GM12878 (cell line): ENCODE measurements at regions of chr9 and their contacts with region 1.

Region 1: GRCh38 chr9:35071814-35072460 is 488 bp downstream of the VCP start:
- DNase-seq: no peak
- ATAC-seq: peak; percentile 86
- H3K4me3 ChIP-seq: peak overlapping the region; percentile 78
- H3K27ac ChIP-seq: peak overlapping the region; percentile 88
- H3K4me1 ChIP-seq: peaks cover 12% of the 10 kb centered on the region
- H3K27me3 ChIP-seq: no peaks in the 10 kb centered on the region
- CTCF ChIP-seq: peak in 2 of 3 experiments; percentile 29 to 33; a peak in 3 of 6 replicates
- EP300 ChIP-seq: no peak
- POLR2A ChIP-seq: no peak; the same call in 1 of the 2 replicates
- RAD21 ChIP-seq: no peak

Region 2: DNA sequence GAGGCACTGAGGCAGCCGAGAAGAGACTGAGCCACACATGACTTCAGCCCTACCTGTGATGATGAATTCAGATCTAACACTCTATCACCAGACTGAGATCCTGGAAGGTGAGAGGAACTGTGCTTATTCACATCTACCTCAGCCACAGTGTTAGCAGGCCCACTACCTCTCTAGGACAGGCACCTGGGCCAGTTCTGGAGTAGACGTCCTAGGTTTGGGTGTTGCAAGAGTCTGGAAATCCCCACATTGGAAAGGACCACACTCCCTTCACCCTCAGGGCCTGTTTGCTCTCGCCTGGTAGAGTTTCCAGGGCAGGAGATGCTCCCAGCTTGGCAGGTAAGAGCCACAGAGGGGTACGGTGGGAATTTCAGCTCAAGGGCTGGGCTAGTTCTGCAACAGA is 248.2 kb before region 1 on chr9:
- CTCF ChIA-PET with region 1: no interaction called
- POLR2A ChIA-PET with region 1: no interaction called
- RAD21 ChIA-PET with region 1: no interaction called
- SMC1A ChIA-PET with region 1: no interaction called
- in situ Hi-C with region 1: no loop called
- intact Hi-C with region 1: no loop called
- DNase-seq: no peak
- ATAC-seq: no peak
- H3K4me3 ChIP-seq: no peak overlapping the region
- H3K27ac ChIP-seq: no peak overlapping the region
- H3K4me1 ChIP-seq: no peaks in the 10 kb centered on the region
- H3K27me3 ChIP-seq: no peaks in the 10 kb centered on the region
- CTCF ChIP-seq: no peak
- EP300 ChIP-seq: no peak
- POLR2A ChIP-seq: no peak
- RAD21 ChIP-seq: no peak

Region 3: DNA sequence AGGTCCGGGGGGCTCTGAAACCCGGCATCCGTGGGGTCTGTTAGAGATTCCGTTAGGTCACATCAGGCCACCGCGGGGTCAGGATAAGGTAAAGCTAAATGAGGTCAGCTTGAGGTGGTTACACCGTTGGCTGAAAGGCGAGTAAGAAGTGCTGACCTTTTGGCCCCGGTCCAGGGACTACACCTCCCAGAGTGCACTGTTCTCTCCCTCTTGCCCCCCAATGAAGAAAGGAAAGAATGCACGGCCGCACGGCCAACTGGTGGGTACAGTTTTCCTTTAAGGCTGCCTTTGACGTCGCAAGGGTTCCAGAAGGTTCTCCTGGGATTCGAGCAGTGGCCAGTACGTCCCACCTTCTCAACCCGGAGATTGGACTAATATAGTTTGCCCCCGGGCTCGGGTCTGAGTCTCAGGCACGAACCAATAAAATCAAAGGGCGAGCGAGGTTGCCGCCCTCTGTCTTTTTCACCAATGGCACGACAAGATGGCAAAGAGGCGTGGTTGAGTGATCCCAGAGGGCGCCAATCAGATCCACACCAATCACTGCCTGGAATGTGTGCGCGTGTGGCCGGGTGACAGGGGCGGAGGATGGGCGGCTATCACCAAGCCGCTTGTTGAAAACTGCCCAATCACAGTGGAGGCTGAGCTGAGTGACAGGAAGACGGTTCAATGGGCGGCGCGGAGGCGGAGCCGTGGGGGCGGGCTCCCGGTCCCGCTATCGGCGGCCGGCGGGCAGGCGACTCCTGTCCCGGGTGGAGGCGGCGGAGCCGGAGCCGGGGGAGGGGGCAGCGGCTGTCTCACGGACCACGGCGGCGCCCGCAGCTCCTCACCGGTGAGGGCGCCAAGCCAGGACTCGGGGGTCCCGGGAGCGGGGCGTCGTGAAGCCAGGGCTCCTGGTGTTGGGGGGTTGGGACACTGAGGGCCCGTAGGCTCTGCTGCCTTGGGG is 82.7 kb before region 1 on chr9 and contains the start of gene DNAJB5:
- CTCF ChIA-PET with region 1: interaction called, 7 read pairs
- POLR2A ChIA-PET with region 1: interaction called, 18 read pairs
- RAD21 ChIA-PET with region 1: interaction called, 5 read pairs
- SMC1A ChIA-PET with region 1: interaction called, 3 read pairs
- in situ Hi-C with region 1: no loop called
- intact Hi-C with region 1: loop called (anchors 5 kb)
- DNase-seq: peak; percentile 97
- ATAC-seq: peak; percentile 92
- H3K4me3 ChIP-seq: peak within 1 kb of the TSS; percentile 95
- H3K27ac ChIP-seq: peak within 1 kb of the TSS; percentile 79
- H3K4me1 ChIP-seq: peaks cover 51% of the 10 kb centered on the region
- H3K27me3 ChIP-seq: no peaks in the 10 kb centered on the region
- CTCF ChIP-seq: no peak
- EP300 ChIP-seq: no peak
- POLR2A ChIP-seq: peak; percentile 71
- RAD21 ChIP-seq: no peak
- polyA plus RNA-seq, gene DNAJB5: 0.92 to 1.5 TPM

Region 4: DNA sequence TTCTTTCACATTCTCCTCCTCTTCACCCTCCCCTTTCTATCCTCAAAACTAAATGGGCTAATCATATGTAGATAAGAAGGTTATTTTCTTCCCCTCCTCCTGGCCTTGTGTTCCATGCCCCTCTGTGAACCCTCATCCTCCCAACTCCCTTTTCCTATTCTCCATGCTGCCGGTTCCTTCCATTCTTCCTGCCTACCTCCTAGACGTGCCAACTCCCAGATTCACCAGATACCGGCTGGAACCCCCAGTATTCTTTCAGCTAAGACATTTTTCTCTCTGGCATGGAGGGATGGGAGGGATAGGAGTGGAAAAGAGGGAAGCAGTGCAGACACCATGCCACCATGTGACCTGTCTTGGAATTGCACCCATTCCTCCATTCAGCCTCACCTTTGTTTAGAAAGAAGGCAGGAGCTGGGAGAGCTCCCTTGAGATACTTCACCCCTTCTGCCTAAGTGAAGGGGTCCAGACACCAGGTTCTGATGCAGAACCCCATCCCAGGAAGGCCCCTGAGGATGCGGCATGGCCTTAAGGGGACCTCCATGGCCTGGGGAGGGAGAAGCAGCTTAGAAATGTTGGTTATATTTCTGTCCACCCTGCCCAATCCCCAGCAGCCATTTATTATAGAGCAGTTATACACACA is 77.6 kb before region 1 on chr9:
- CTCF ChIA-PET with region 1: interaction called, 5 read pairs
- POLR2A ChIA-PET with region 1: interaction called, 18 read pairs
- RAD21 ChIA-PET with region 1: interaction called, 5 read pairs
- SMC1A ChIA-PET with region 1: no interaction called
- in situ Hi-C with region 1: no loop called
- intact Hi-C with region 1: loop called (anchors 5 kb)
- DNase-seq: no peak
- ATAC-seq: no peak
- H3K4me3 ChIP-seq: no peak overlapping the region
- H3K27ac ChIP-seq: peak overlapping the region; percentile 69; the same call in 1 of the 2 replicates
- H3K4me1 ChIP-seq: peaks cover 33% of the 10 kb centered on the region
- H3K27me3 ChIP-seq: no peaks in the 10 kb centered on the region
- CTCF ChIP-seq: peak; percentile 32 to 56 (median 45)
- EP300 ChIP-seq: no peak
- POLR2A ChIP-seq: no peak
- RAD21 ChIP-seq: no peak

Region 5: DNA sequence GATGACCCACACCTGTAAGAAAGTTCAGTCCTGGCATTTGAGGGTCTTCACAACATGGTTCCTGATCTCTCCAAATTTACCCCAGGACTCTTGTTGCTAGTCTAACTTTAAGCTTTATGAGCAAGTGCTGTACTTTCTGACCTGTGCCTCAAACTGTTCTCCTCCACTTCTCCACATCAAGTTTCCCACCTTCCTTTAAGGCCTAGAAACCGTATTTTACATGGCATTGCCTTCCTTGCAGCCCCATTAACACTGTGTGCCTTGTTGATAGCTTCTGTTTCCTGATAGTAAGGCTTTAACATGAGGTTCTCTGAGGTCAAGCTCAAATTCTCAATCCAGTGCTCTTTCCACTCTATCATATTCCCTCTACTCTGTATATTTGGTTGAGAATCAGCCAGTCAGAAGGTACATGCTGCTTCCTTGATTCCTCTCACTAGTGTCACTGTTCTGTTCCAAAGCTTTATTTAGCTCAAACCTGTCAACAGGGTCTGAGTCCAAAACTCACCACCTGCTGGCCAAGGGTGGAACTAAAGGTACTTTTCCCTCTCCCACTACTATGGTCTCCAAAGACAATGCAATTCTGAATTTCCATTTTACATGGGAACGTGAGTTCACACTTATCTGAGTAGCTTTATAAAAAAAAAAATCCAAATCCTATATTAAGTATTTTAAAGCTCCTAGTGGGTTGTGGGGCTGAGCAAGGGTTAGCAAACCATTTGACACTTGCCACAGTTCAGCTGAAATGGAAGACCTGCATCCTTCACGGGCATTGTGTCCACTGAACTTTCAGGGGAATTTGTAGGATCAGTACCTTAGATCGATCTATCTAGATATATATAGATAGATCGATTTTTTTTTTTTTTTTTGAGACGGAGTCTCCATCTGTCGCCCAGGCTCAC is 20.6 kb before region 1 on chr9:
- CTCF ChIA-PET with region 1: interaction called, 29 read pairs
- POLR2A ChIA-PET with region 1: interaction called, 3 read pairs
- RAD21 ChIA-PET with region 1: interaction called, 11 read pairs
- SMC1A ChIA-PET with region 1: interaction called, 8 read pairs
- in situ Hi-C with region 1: no loop called
- intact Hi-C with region 1: no loop called
- DNase-seq: no peak
- ATAC-seq: peak; percentile 93
- H3K4me3 ChIP-seq: no peak overlapping the region
- H3K27ac ChIP-seq: no peak overlapping the region
- H3K4me1 ChIP-seq: no peaks in the 10 kb centered on the region
- H3K27me3 ChIP-seq: no peaks in the 10 kb centered on the region
- CTCF ChIP-seq: peak; percentile 64 to 66 (median 64); a peak in 5 of 6 replicates
- EP300 ChIP-seq: no peak
- POLR2A ChIP-seq: no peak
- RAD21 ChIP-seq: peak; percentile 72

Region 6: GRCh38 chr9:35096035-35096849 is 24.3 kb after region 1 on chr9 and contains the start of gene PIGO:
- CTCF ChIA-PET with region 1: interaction called, 19 read pairs
- POLR2A ChIA-PET with region 1: interaction called, 4 read pairs
- RAD21 ChIA-PET with region 1: interaction called, 3 read pairs
- SMC1A ChIA-PET with region 1: interaction called, 17 read pairs
- in situ Hi-C with region 1: no loop called
- intact Hi-C with region 1: no loop called
- DNase-seq: no peak
- ATAC-seq: peak; percentile 95
- H3K4me3 ChIP-seq: peak within 1 kb of the TSS; percentile 81
- H3K27ac ChIP-seq: peak within 1 kb of the TSS; percentile 100
- H3K4me1 ChIP-seq: peaks cover 7% of the 10 kb centered on the region
- H3K27me3 ChIP-seq: no peaks in the 10 kb centered on the region
- CTCF ChIP-seq: peak; percentile 87 to 98 (median 96)
- EP300 ChIP-seq: no peak
- POLR2A ChIP-seq: peak; percentile 98
- RAD21 ChIP-seq: peak; percentile 69
- polyA plus RNA-seq, gene PIGO: 8.3 to 13.1 TPM

Region 7: GRCh38 chr9:35102926-35103659 is 31.2 kb after region 1 on chr9 and contains the start of gene STOML2:
- CTCF ChIA-PET with region 1: interaction called, 19 read pairs
- POLR2A ChIA-PET with region 1: interaction called, 11 read pairs
- RAD21 ChIA-PET with region 1: interaction called, 7 read pairs
- SMC1A ChIA-PET with region 1: interaction called, 17 read pairs
- in situ Hi-C with region 1: no loop called
- intact Hi-C with region 1: no loop called
- DNase-seq: peak; percentile 78
- ATAC-seq: peak; percentile 99
- H3K4me3 ChIP-seq: peak within 1 kb of the TSS; percentile 79
- H3K27ac ChIP-seq: peak within 1 kb of the TSS; percentile 88
- H3K4me1 ChIP-seq: peaks cover 5% of the 10 kb centered on the region
- H3K27me3 ChIP-seq: no peaks in the 10 kb centered on the region
- CTCF ChIP-seq: no peak
- EP300 ChIP-seq: peak in 1 of 2 experiments; percentile 73; a peak in 2 of 4 replicates
- POLR2A ChIP-seq: peak; percentile 88
- RAD21 ChIP-seq: no peak
- polyA plus RNA-seq, gene STOML2: 112 to 148 TPM

Region 8: GRCh38 chr9:35111001-35111933 is 39.3 kb after region 1 on chr9:
- CTCF ChIA-PET with region 1: interaction called, 5 read pairs
- POLR2A ChIA-PET with region 1: interaction called, 9 read pairs
- RAD21 ChIA-PET with region 1: interaction called, 4 read pairs
- SMC1A ChIA-PET with region 1: no interaction called
- in situ Hi-C with region 1: no loop called
- intact Hi-C with region 1: loop called (anchors 5 kb)
- DNase-seq: peak; percentile 89
- ATAC-seq: peak; percentile 87
- H3K4me3 ChIP-seq: peak overlapping the region; percentile 98
- H3K27ac ChIP-seq: peak overlapping the region; percentile 24; the same call in 1 of the 2 replicates
- H3K4me1 ChIP-seq: peaks cover 26% of the 10 kb centered on the region
- H3K27me3 ChIP-seq: no peaks in the 10 kb centered on the region
- CTCF ChIP-seq: no peak
- EP300 ChIP-seq: no peak
- POLR2A ChIP-seq: peak; percentile 62; the same call in 1 of the 2 replicates
- RAD21 ChIP-seq: no peak